ENCODE measurements at regions of chr6 and their contacts with region 1.

Region 1: GRCh38 chr6:44096612-44097011 is 30.6 kb downstream of the MRPL14 start:
- DNase-seq: peak; percentile 64 to 87 (median 70)
- ATAC-seq: peak; percentile 95
- H3K4me3 ChIP-seq: no peak overlapping the region
- H3K4me3 Mint-ChIP-seq: no peak overlapping the region
- H3K27ac ChIP-seq: no peak overlapping the region
- H3K27ac Mint-ChIP-seq: no peak overlapping the region
- H3K4me1 ChIP-seq: no peaks in the 10 kb centered on the region
- H3K4me1 Mint-ChIP-seq: no peaks in the 10 kb centered on the region
- H3K27me3 ChIP-seq: no peaks in the 10 kb centered on the region
- H3K27me3 Mint-ChIP-seq: no peaks in the 10 kb centered on the region
- CTCF ChIP-seq: peak; percentile 73

Region 2: GRCh38 chr6:43883847-43884651 is 212.6 kb before region 1 on chr6:
- CTCF ChIA-PET with region 1: no interaction called
- POLR2A ChIA-PET with region 1: no interaction called
- intact Hi-C with region 1: no loop called
- DNase-seq: peak in 3 of 14 experiments; percentile 4 to 28 (median 26)
- ATAC-seq: no peak
- H3K4me3 ChIP-seq: no peak overlapping the region
- H3K4me3 Mint-ChIP-seq: no peak overlapping the region
- H3K27ac ChIP-seq: no peak overlapping the region
- H3K27ac Mint-ChIP-seq: no peak overlapping the region
- H3K4me1 ChIP-seq: no peaks in the 10 kb centered on the region
- H3K4me1 Mint-ChIP-seq: no peaks in the 10 kb centered on the region
- H3K27me3 ChIP-seq: no peaks in the 10 kb centered on the region
- H3K27me3 Mint-ChIP-seq: peaks cover 13% of the 10 kb centered on the region
- CTCF ChIP-seq: no peak

Region 3: GRCh38 chr6:44151348-44152108 is 54.9 kb after region 1 on chr6:
- CTCF ChIA-PET with region 1: interaction called, 8 read pairs
- POLR2A ChIA-PET with region 1: interaction called, 3 read pairs
- intact Hi-C with region 1: loop called (anchors 1 kb)
- DNase-seq: peak; percentile 64 to 88 (median 76)
- ATAC-seq: peak; percentile 92
- H3K4me3 ChIP-seq: no peak overlapping the region
- H3K4me3 Mint-ChIP-seq: no peak overlapping the region
- H3K27ac ChIP-seq: no peak overlapping the region
- H3K27ac Mint-ChIP-seq: no peak overlapping the region
- H3K4me1 ChIP-seq: peaks cover 16% of the 10 kb centered on the region
- H3K4me1 Mint-ChIP-seq: peaks cover 4% of the 10 kb centered on the region
- H3K27me3 ChIP-seq: no peaks in the 10 kb centered on the region
- H3K27me3 Mint-ChIP-seq: no peaks in the 10 kb centered on the region
- CTCF ChIP-seq: peak; percentile 98

Region 4: DNA sequence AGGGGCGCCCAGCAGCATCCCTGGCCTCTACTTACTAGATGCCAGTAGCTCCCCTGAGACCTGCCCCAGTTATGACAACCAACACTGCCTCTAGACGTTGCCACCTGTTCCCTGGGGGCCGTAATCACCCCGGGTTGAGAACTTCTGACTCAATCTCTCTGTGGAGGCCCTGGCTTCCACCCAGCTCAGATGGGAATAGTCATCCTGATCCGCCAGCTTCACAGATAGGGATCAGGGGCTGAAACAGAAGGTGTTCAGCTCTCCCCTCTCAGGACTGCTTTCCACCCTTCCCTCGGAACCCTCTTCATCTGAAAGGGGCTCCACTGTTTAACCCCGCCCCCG is 65.4 kb after region 1 on chr6:
- CTCF ChIA-PET with region 1: no interaction called
- POLR2A ChIA-PET with region 1: no interaction called
- intact Hi-C with region 1: no loop called
- DNase-seq: no peak
- ATAC-seq: no peak
- H3K4me3 ChIP-seq: no peak overlapping the region
- H3K4me3 Mint-ChIP-seq: no peak overlapping the region
- H3K27ac ChIP-seq: no peak overlapping the region
- H3K27ac Mint-ChIP-seq: no peak overlapping the region
- H3K4me1 ChIP-seq: no peaks in the 10 kb centered on the region
- H3K4me1 Mint-ChIP-seq: no peaks in the 10 kb centered on the region
- H3K27me3 ChIP-seq: peaks cover 0 to 4% of the 10 kb centered on the region in 2 experiments
- H3K27me3 Mint-ChIP-seq: no peaks in the 10 kb centered on the region
- CTCF ChIP-seq: no peak

Region 5: GRCh38 chr6:44237813-44238433 is 141.3 kb after region 1 on chr6:
- CTCF ChIA-PET with region 1: interaction called, 5 read pairs
- POLR2A ChIA-PET with region 1: no interaction called
- intact Hi-C with region 1: loop called (anchors 1 to 5 kb)
- DNase-seq: peak; percentile 61 to 90 (median 74)
- ATAC-seq: peak; percentile 89
- H3K4me3 ChIP-seq: peak overlapping the region; percentile 64
- H3K4me3 Mint-ChIP-seq: peak overlapping the region; percentile 90
- H3K27ac ChIP-seq: peak overlapping the region; percentile 74 to 80
- H3K27ac Mint-ChIP-seq: peak overlapping the region; percentile 86
- H3K4me1 ChIP-seq: peaks cover 18% of the 10 kb centered on the region
- H3K4me1 Mint-ChIP-seq: peaks cover 8% of the 10 kb centered on the region
- H3K27me3 ChIP-seq: no peaks in the 10 kb centered on the region
- H3K27me3 Mint-ChIP-seq: no peaks in the 10 kb centered on the region
- CTCF ChIP-seq: peak; percentile 99

Region 6: DNA sequence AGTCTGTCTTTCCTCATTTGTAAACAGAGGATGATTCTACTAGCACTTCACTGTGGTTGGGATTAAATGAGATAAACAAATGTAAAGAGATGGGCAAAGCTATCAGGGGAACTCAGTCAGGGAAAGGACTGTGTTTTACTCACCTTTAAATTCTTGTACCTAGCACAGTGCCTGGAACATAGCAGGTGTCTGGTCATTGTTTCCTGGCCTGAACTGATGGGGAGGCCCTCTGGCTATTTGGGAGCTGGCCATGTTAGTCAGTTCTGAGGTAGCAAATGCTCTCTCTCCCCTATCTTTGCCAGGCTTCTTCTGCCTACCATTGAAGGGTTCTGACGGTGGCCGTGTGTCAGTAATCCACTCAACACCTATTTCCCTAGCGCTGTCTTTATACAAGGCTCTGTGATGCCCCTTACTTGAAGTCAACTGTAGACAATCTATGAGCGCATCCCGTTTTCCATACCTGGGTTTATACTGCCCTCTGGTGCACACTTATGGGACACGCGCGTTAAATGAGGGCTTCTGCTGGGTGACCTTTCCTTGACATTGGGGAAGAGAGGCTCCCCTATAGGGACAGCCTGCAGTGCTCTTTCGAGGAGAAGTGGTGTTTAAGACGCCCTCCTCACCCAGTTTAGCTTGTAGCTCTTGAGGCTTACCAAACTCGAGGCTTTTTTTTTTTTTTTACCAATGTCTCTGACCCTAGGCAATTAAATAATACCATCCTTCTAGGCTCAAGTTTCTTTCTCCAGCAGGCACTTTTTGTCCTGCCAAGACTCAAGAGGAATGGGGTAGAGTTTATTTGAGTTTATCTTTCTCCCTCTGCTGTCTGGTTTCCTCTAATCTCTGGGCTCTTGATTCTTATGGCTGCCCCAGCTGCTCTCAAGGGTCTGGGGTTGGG is 241.9 kb after region 1 on chr6:
- CTCF ChIA-PET with region 1: no interaction called
- POLR2A ChIA-PET with region 1: no interaction called
- intact Hi-C with region 1: loop called (anchors 1 kb)
- DNase-seq: peak; percentile 36 to 81 (median 55)
- ATAC-seq: peak; percentile 91
- H3K4me3 ChIP-seq: no peak overlapping the region
- H3K4me3 Mint-ChIP-seq: no peak overlapping the region
- H3K27ac ChIP-seq: no peak overlapping the region
- H3K27ac Mint-ChIP-seq: no peak overlapping the region
- H3K4me1 ChIP-seq: peaks cover 8% of the 10 kb centered on the region
- H3K4me1 Mint-ChIP-seq: no peaks in the 10 kb centered on the region
- H3K27me3 ChIP-seq: peaks cover 21 to 26% of the 10 kb centered on the region in 2 experiments
- H3K27me3 Mint-ChIP-seq: peaks cover 33% of the 10 kb centered on the region
- CTCF ChIP-seq: peak; percentile 69

Region 7: DNA sequence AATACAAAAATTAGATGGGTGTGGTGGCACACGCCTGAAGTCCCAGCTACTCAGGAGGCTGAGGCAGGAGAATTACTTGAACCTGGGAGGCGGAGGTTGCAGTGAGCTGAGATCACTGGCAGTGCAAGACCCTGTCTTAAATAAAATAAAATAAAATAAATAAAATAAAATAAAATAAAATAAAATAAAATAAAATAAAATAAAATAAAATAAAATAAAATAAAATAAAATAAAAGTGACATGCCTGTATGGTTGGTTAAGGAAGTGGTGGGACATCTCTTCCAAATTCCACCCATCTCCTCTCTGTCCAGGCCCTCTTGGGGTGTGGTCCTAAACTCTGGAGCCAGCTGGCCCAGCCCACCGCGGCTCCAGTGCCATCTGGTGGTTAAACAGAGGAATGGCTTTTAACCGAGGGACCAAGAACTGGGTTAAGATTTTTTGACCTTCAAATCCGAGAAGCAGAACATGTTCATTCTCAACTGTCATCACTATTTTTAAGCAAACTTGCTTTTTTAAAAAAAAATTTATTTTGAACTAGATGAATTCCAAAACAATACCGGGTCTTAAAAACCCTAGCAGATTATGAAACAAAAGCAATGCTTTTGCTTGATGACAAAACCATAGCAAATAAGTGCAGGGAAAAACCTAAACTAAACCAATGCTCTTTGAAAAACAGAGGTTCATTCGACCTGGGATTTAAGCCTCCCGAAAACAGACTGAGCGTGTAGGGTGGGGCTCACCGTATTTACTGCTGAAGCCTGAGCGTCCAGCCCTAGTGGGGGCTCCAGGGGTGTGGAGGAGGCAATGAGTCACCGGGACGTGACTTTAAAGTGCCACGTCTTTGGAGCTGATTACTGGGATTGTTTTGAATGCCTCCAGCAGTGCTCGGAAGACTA is 359.7 kb after region 1 on chr6:
- CTCF ChIA-PET with region 1: no interaction called
- POLR2A ChIA-PET with region 1: no interaction called
- intact Hi-C with region 1: loop called in 1 of 2 experiments (anchors 10 kb)
- DNase-seq: peak in 11 of 14 experiments; percentile 6 to 72 (median 24)
- ATAC-seq: peak; percentile 75
- H3K4me3 ChIP-seq: no peak overlapping the region
- H3K4me3 Mint-ChIP-seq: no peak overlapping the region
- H3K27ac ChIP-seq: no peak overlapping the region
- H3K27ac Mint-ChIP-seq: no peak overlapping the region
- H3K4me1 ChIP-seq: no peaks in the 10 kb centered on the region
- H3K4me1 Mint-ChIP-seq: no peaks in the 10 kb centered on the region
- H3K27me3 ChIP-seq: peaks cover 0 to 2% of the 10 kb centered on the region in 2 experiments
- H3K27me3 Mint-ChIP-seq: no peaks in the 10 kb centered on the region
- CTCF ChIP-seq: peak; percentile 76

Measured in CD4-positive, alpha-beta T cell (primary cell).